ENCODE measurements at regions of chr1 and their contacts with region 1.

Region 1: GRCh38 chr1:8554956-8555534 is 237.1 kb downstream of the SLC45A1 start:
- DNase-seq: no peak
- H3K4me3 Mint-ChIP-seq: no peak overlapping the region
- H3K27ac Mint-ChIP-seq: peak overlapping the region; percentile 83
- H3K4me1 Mint-ChIP-seq: peaks cover 41% of the 10 kb centered on the region
- H3K27me3 Mint-ChIP-seq: no peaks in the 10 kb centered on the region

Region 2: GRCh38 chr1:8510041-8510823 is 44.8 kb before region 1 on chr1:
- intact Hi-C with region 1: loop called (anchors 1 kb)
- DNase-seq: peak; percentile 85
- H3K4me3 Mint-ChIP-seq: peak overlapping the region; percentile 56
- H3K27ac Mint-ChIP-seq: peak overlapping the region; percentile 89
- H3K4me1 Mint-ChIP-seq: peaks cover 37% of the 10 kb centered on the region
- H3K27me3 Mint-ChIP-seq: no peaks in the 10 kb centered on the region